SK-N-SH (cell line): ENCODE measurements at regions of chr2 and their contacts with region 1.

Region 1: GRCh38 chr2:104849618-104850141 is 4.2 kb upstream of the POU3F3 start:
- DNase-seq: peak; percentile 63
- H3K4me3 ChIP-seq: peak overlapping the region in 1 of 2 experiments; percentile 39; a peak in 1 of 4 replicates
- H3K27ac ChIP-seq: no peak overlapping the region
- H3K4me1 ChIP-seq: peaks cover 0 to 6% of the 10 kb centered on the region in 2 experiments; a peak in 1 of 4 replicates
- H3K27me3 ChIP-seq: peaks cover 59% of the 10 kb centered on the region
- CTCF ChIP-seq: peak; percentile 91
- EP300 ChIP-seq: no peak
- RAD21 ChIP-seq: peak; percentile 81

Region 2: GRCh38 chr2:104033399-104033798 is 816.3 kb before region 1 on chr2:
- CTCF ChIA-PET with region 1: interaction called, 23 read pairs
- POLR2A ChIA-PET with region 1: no interaction called
- DNase-seq: no peak
- H3K4me3 ChIP-seq: no peak overlapping the region
- H3K27ac ChIP-seq: no peak overlapping the region
- H3K4me1 ChIP-seq: no peaks in the 10 kb centered on the region
- H3K27me3 ChIP-seq: no peaks in the 10 kb centered on the region
- CTCF ChIP-seq: peak; percentile 33
- EP300 ChIP-seq: no peak
- RAD21 ChIP-seq: peak; percentile 66

Region 3: DNA sequence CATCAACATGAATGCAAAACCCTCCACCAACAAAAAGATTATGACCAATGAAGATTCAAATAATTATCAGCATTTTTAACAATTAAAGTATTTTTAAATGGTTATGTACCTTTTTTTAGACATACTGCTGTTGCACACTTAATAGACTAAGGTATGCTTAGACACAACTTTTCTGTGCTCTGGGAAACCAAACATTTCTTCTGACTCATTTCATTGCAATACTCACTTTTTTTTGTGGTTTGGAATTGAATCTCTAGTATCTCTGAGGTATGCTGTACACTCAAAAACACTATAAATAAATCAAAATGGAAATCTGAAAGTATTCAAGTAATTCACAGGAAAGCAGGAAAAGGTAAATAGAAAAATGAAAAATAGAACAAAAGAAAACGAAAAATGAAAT is 243.6 kb before region 1 on chr2:
- CTCF ChIA-PET with region 1: no interaction called
- POLR2A ChIA-PET with region 1: no interaction called
- DNase-seq: no peak
- H3K4me3 ChIP-seq: no peak overlapping the region
- H3K27ac ChIP-seq: no peak overlapping the region
- H3K4me1 ChIP-seq: no peaks in the 10 kb centered on the region
- H3K27me3 ChIP-seq: no peaks in the 10 kb centered on the region
- CTCF ChIP-seq: no peak
- EP300 ChIP-seq: no peak
- RAD21 ChIP-seq: no peak

Region 4: DNA sequence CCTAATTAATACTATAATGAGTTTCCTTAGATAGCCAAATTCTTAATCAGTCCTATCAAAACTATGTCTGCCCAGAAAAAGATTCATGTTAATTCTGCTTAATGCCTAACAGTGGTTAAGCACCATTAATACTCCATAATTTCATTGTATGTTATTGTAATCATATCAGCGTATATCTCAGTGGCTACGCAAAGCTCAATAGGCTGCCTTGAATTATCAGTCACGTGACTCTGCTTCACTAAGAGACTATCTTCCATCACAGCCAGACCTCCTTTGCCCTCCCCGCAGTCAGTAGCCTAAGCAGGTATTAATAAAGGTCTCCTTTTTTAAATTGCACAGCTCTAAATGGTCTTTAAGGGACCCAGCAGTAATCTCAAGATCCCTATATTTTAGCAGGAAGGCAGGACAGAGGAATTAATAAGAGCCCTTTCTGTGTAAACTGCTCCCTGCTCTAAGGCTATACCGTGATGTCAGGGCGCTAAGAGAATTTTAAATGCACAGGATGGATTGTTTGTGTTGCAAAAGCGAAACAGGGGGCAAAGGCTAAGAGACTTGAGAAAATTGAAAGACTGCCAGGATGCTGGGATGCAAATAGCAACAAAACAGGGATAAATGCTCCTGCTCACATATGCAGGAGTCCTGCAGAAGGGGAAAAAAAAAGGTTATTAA is 211.4 kb before region 1 on chr2:
- CTCF ChIA-PET with region 1: interaction called, 12 read pairs
- POLR2A ChIA-PET with region 1: no interaction called
- DNase-seq: peak; percentile 42
- H3K4me3 ChIP-seq: peak overlapping the region in 1 of 2 experiments; percentile 1; a peak in 1 of 4 replicates
- H3K27ac ChIP-seq: peak overlapping the region in 1 of 2 experiments; percentile 96; a peak in 2 of 4 replicates
- H3K4me1 ChIP-seq: peaks cover 0 to 28% of the 10 kb centered on the region in 2 experiments; a peak in 2 of 4 replicates
- H3K27me3 ChIP-seq: no peaks in the 10 kb centered on the region
- CTCF ChIP-seq: no peak
- EP300 ChIP-seq: peak in 1 of 2 experiments; percentile 79; a peak in 2 of 4 replicates
- RAD21 ChIP-seq: peak; percentile 28

Region 5: GRCh38 chr2:104862058-104862941 is 12.6 kb after region 1 on chr2:
- CTCF ChIA-PET with region 1: interaction called, 35 read pairs
- POLR2A ChIA-PET with region 1: no interaction called
- DNase-seq: peak; percentile 58
- H3K4me3 ChIP-seq: no peak overlapping the region; a peak in 2 of 4 replicates
- H3K27ac ChIP-seq: no peak overlapping the region
- H3K4me1 ChIP-seq: no peaks in the 10 kb centered on the region; a peak in 1 of 4 replicates
- H3K27me3 ChIP-seq: peaks cover 57% of the 10 kb centered on the region
- CTCF ChIP-seq: no peak
- EP300 ChIP-seq: no peak
- RAD21 ChIP-seq: no peak